ENCODE measurements at regions of chr10 and their contacts with region 1.

Region 1: GRCh38 chr10:31031558-31032257 is at the start of gene ZNF438:
- DNase-seq: peak; percentile 93
- H3K4me3 Mint-ChIP-seq: peak within 1 kb of the TSS; percentile 88
- H3K27ac Mint-ChIP-seq: peak within 1 kb of the TSS; percentile 99
- H3K4me1 Mint-ChIP-seq: peaks cover 25% of the 10 kb centered on the region
- H3K27me3 Mint-ChIP-seq: no peaks in the 10 kb centered on the region
- total RNA-seq, gene ZNF438: 2.4 and 2.6 TPM in 2 replicates

Region 2: GRCh38 chr10:30687698-30688219 is 343.9 kb before region 1 on chr10:
- intact Hi-C with region 1: loop called (anchors 1 kb)
- DNase-seq: peak; percentile 63
- H3K4me3 Mint-ChIP-seq: no peak overlapping the region
- H3K27ac Mint-ChIP-seq: no peak overlapping the region
- H3K4me1 Mint-ChIP-seq: peaks cover 44% of the 10 kb centered on the region
- H3K27me3 Mint-ChIP-seq: peaks cover 5% of the 10 kb centered on the region

Region 3: DNA sequence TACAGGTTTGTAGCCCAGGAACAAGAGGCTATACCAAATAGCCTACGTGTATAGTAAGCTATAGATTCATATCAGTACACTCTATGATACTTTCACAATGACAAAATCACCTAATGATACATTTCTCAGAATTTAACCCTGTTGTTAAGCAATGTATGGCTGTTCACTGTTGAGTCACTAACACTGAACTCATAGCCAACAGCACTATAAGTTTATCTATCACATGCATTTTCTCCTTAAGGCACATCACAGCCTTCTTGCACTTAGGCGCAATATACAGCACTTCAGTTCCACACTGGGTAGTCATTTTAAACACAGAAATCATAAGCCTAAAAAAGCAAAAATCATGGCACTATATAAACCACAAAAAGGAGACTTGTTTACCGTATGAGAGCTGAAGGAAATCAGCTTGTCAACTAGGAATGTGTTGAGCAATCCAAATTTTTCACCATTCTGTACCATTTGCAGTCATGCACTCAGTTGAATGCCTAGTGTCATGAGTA is 45.6 kb before region 1 on chr10:
- intact Hi-C with region 1: loop called (anchors 1 kb)
- DNase-seq: no peak
- H3K4me3 Mint-ChIP-seq: peak overlapping the region; percentile 5
- H3K27ac Mint-ChIP-seq: peak overlapping the region; percentile 85
- H3K4me1 Mint-ChIP-seq: peaks cover 13% of the 10 kb centered on the region
- H3K27me3 Mint-ChIP-seq: no peaks in the 10 kb centered on the region

Region 4: DNA sequence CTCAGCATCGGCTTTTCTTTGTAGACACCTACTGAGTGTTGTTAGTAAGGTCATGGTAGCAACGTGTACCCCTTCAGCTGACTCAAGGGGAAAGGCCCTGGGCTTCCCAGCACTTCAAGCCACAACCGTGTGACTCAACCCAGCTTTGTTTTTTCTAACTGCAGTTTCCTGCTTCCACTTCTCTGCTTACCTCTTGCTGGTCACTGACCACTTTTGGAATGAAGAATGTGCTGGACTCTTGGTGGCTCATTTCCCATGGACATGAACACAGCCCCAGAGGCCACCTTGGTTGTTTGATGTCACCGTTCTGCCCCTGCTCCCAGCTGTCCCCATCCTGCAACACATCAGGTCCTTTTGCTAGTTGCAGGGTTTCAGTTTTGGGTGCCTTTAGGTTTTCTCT is 69.4 kb after region 1 on chr10:
- intact Hi-C with region 1: loop called (anchors 1 kb)
- DNase-seq: peak; percentile 72
- H3K4me3 Mint-ChIP-seq: peak overlapping the region; percentile 51
- H3K27ac Mint-ChIP-seq: peak overlapping the region; percentile 94
- H3K4me1 Mint-ChIP-seq: peaks cover 81% of the 10 kb centered on the region
- H3K27me3 Mint-ChIP-seq: no peaks in the 10 kb centered on the region

Region 5: GRCh38 chr10:31340343-31340742 is 308.6 kb after region 1 on chr10:
- intact Hi-C with region 1: loop called (anchors 2 kb)
- DNase-seq: no peak
- H3K4me3 Mint-ChIP-seq: no peak overlapping the region
- H3K27ac Mint-ChIP-seq: no peak overlapping the region
- H3K4me1 Mint-ChIP-seq: no peaks in the 10 kb centered on the region
- H3K27me3 Mint-ChIP-seq: no peaks in the 10 kb centered on the region

Region 6: GRCh38 chr10:31603235-31604087 is 571.8 kb after region 1 on chr10:
- intact Hi-C with region 1: loop called (anchors 1 kb)
- DNase-seq: peak; percentile 82
- H3K4me3 Mint-ChIP-seq: peak overlapping the region; percentile 80
- H3K27ac Mint-ChIP-seq: no peak overlapping the region
- H3K4me1 Mint-ChIP-seq: peaks cover 29% of the 10 kb centered on the region
- H3K27me3 Mint-ChIP-seq: peaks cover 6% of the 10 kb centered on the region

Region 7: DNA sequence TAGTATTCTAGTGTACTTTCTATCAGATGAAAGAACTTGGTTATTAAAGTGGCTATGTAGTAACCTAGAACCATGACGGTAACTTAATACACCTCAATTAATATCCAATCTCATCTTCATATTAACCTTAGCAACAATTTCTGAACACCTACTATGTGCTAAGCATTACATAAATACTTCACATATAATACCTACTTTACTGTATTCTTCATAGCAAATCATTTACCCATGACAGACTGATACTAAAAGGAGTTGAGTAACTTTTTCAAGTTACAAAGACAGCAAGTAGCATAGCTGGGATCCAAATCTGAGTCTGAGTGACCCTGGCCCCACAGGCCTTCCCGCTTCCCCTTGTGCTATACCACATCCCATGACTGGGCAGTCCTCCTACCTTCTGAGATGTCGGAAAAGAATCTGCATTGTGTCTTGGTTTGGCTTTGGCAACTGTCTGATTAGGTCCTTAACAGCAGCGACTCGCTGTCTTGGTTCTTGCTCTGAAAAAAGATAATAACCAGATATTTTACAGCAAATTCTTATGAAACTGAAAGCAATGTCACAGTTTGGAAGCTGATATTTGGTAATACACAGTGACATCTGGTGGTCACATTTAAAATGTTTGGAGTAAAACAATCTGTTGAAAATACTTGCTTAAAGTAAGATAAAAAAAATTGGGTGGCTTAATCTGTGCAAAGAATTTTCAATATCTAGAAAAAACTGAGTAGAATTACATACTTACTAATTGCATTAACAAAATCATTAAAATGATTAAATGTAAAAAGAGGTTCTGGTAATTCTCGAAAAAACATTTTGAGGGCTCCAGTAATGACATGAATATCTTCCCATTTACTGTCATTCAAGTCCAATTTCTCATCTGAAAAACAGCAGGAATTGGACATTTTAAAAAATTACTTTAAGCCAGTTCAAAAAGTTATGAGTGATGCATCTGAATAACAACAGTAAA is 776.8 kb after region 1 on chr10:
- intact Hi-C with region 1: loop called (anchors 1 kb)
- DNase-seq: peak; percentile 2
- H3K4me3 Mint-ChIP-seq: peak overlapping the region; percentile 50
- H3K27ac Mint-ChIP-seq: peak overlapping the region; percentile 57
- H3K4me1 Mint-ChIP-seq: peaks cover 7% of the 10 kb centered on the region
- H3K27me3 Mint-ChIP-seq: peaks cover 3% of the 10 kb centered on the region